ENCODE measurements at regions of chr7 and their contacts with region 1.

Region 1: DNA sequence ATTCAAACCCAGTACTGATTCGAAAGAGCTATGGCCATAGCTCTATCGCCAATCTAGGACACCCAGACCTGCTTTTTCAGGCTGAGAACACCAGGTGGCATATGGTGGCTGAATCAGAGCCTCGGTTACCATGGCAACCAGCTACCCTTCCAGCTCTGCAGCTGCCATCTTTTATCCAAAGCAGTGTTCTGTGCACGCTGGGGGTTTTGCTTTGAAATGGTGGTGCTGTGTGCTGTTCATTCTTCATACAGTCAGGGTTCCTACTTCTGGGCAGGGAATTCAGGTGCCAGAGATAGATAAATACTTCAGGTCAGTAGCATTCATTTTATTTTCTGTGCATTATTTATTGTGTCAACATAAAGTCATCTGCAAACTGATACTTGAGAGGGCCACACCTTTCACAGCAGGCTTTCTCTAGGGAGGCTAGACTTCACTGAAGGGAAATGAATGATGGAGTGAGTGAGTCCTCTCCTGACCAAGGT is 85.4 kb downstream of the AKR1D1 start:
- DNase-seq: peak; percentile 84
- H3K4me3 ChIP-seq: no peak overlapping the region
- H3K27ac ChIP-seq: no peak overlapping the region
- H3K4me1 ChIP-seq: no peaks in the 10 kb centered on the region
- H3K27me3 ChIP-seq: no peaks in the 10 kb centered on the region
- CTCF ChIP-seq: peak in 5 of 6 experiments; percentile 22 to 87 (median 73)
- POLR2A ChIP-seq: no peak

Region 2: DNA sequence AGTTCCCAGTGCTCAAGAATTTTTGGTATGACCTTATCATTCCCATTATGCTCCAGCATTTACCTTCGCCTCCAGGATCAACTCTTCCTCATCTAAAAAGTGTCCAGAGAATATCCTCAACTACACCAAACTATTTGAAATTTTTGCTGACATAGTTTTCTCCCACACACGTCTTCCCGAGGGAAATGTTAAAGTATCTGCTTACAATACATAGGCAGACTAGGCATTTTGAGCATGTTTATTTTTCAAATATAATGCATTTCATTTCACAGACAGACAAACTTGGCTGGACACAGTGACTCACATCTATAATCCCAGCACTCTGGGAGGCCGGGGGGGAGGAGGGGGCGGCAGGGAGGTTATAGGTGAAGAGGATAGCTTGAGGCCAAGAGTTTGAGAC is 121.4 kb after region 1 on chr7:
- intact Hi-C with region 1: no loop called
- DNase-seq: no peak
- H3K4me3 ChIP-seq: no peak overlapping the region
- H3K27ac ChIP-seq: no peak overlapping the region
- H3K4me1 ChIP-seq: no peaks in the 10 kb centered on the region
- H3K27me3 ChIP-seq: no peaks in the 10 kb centered on the region
- CTCF ChIP-seq: no peak
- POLR2A ChIP-seq: no peak

Region 3: GRCh38 chr7:138295049-138295637 is 133.5 kb after region 1 on chr7:
- intact Hi-C with region 1: no loop called
- DNase-seq: no peak
- H3K4me3 ChIP-seq: no peak overlapping the region
- H3K27ac ChIP-seq: no peak overlapping the region
- H3K4me1 ChIP-seq: no peaks in the 10 kb centered on the region
- H3K27me3 ChIP-seq: no peaks in the 10 kb centered on the region
- CTCF ChIP-seq: no peak
- POLR2A ChIP-seq: no peak

Region 4: DNA sequence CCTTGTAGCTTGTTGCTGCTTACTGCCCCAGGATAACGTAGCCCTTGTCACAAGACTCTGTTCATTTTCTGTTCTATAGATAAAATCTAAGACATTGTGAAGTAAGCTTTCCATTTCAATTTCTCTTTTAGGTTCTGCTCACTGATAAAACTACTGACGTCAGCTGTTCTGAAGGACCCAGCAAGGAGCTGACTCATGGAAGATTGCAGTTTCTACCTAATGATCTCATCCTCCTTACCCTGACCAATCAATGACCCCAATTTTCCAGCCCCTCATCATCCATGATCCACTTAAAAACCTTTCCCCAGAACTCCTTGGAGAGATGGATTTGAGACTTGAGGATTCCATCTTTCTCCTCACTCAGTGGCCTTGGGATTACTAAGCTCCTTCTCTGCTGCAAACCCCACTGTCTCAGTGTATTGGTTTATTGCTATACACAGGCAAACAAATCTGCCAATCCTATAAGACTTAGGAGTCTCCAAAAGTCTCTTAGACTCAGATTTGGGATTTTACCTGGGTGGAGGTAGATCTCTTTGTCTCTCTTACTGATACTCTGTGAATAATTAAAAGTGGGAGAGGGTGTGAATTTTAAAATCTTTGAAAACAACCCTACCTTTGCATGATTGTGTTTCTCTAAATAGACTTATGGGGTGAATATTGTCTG is 189.2 kb after region 1 on chr7:
- intact Hi-C with region 1: no loop called
- DNase-seq: no peak
- H3K4me3 ChIP-seq: no peak overlapping the region
- H3K27ac ChIP-seq: no peak overlapping the region
- H3K4me1 ChIP-seq: no peaks in the 10 kb centered on the region
- H3K27me3 ChIP-seq: no peaks in the 10 kb centered on the region
- CTCF ChIP-seq: no peak
- POLR2A ChIP-seq: no peak

Region 5: DNA sequence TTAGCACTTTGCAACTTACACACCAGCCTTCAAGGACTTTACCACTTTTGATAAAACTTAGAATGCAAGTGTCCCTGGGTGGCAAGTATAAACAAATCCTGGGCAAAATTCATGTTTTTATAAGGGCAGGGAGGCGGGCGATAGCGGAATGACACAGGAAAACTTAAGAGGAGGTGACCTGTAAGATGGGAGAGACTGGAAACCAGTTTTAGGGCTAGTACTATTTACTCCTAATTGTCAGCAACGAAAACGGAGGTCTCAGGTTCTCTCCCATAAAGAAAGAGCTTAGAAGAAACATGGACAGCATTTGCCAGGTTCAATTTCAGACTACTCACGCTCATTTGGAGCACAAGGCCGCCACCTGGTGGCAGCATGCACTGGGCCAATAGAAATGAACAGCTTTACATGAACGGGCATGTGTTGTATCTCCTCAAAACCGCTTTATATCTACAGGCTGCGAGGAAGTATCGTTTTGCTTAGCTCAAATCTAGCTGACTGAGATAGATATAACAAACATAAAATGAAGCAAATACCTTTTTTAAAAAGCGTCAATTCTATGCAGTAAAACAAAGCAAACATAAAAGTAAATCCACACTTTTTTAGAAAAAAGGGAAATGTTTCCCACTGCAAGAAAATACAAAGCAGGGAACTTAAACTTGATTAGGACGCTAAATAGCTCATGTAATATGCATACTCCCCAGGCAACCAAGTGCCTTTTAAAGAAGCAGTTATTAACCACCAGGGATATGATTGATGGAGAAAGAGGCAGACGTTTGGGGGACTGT is 577.1 kb after region 1 on chr7:
- intact Hi-C with region 1: loop called (anchors 5 kb)
- DNase-seq: peak; percentile 83 to 90
- H3K4me3 ChIP-seq: no peak overlapping the region
- H3K27ac ChIP-seq: no peak overlapping the region
- H3K4me1 ChIP-seq: no peaks in the 10 kb centered on the region
- H3K27me3 ChIP-seq: no peaks in the 10 kb centered on the region
- CTCF ChIP-seq: peak; percentile 61 to 92 (median 88)
- POLR2A ChIP-seq: no peak

Measured in thyroid gland (tissue), 4 donors.